Gastrocnemius medialis (tissue), 4 donors: ENCODE measurements at regions of chr10 and their contacts with region 1.

Region 1: GRCh38 chr10:92087750-92088395 is 164.3 kb downstream of the BTAF1 start:
- DNase-seq: peak; percentile 52 to 75
- ATAC-seq: peak; percentile 95 to 98
- H3K4me3 ChIP-seq: no peak overlapping the region
- H3K27ac ChIP-seq: peak overlapping the region; percentile 23 to 58 (median 38)
- H3K4me1 ChIP-seq: peaks cover 24 to 27% of the 10 kb centered on the region in 2 donors
- H3K27me3 ChIP-seq: no peaks in the 10 kb centered on the region
- CTCF ChIP-seq: peak; percentile 77 to 95 (median 81)
- POLR2A ChIP-seq: no peak

Region 2: GRCh38 chr10:92240289-92241157 is 152.7 kb after region 1 on chr10:
- in situ Hi-C with region 1: loop called in 1 of 4 experiments (anchors 10 kb)
- intact Hi-C with region 1: loop called (anchors 2 kb)
- DNase-seq: peak; percentile 70 to 77
- ATAC-seq: peak; percentile 68 to 75
- H3K4me3 ChIP-seq: peak overlapping the region; percentile 76 to 80 (median 78)
- H3K27ac ChIP-seq: peak overlapping the region; percentile 89 to 95 (median 94)
- H3K4me1 ChIP-seq: peaks cover 54 to 62% of the 10 kb centered on the region in 2 donors
- H3K27me3 ChIP-seq: no peaks in the 10 kb centered on the region
- CTCF ChIP-seq: no peak
- POLR2A ChIP-seq: peak; percentile 53 to 84

Region 3: DNA sequence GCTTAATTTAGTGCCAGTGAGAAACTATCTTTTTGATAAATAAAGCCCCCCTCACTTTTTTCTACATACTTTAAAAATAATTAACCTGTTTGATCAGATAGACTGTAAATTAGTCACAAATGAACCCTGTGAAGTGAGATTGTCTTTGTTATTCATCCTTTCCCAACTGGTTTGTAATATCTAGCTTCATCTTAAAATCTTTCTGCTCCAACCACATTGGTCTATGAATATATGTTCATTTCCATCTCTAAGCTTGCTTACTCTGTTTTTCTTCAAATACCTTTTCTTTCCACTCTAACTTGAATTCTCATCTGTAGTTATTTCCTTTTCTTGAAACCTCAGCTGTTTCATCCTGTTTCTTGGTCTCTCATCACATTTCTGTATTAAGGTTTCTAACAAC is 215.2 kb after region 1 on chr10:
- in situ Hi-C with region 1: loop called (anchors 10 to 25 kb)
- intact Hi-C with region 1: no loop called
- DNase-seq: no peak
- ATAC-seq: no peak
- H3K4me3 ChIP-seq: no peak overlapping the region
- H3K27ac ChIP-seq: no peak overlapping the region
- H3K4me1 ChIP-seq: peaks cover 11 to 42% of the 10 kb centered on the region in 2 donors
- H3K27me3 ChIP-seq: no peaks in the 10 kb centered on the region
- CTCF ChIP-seq: no peak
- POLR2A ChIP-seq: no peak

Region 4: DNA sequence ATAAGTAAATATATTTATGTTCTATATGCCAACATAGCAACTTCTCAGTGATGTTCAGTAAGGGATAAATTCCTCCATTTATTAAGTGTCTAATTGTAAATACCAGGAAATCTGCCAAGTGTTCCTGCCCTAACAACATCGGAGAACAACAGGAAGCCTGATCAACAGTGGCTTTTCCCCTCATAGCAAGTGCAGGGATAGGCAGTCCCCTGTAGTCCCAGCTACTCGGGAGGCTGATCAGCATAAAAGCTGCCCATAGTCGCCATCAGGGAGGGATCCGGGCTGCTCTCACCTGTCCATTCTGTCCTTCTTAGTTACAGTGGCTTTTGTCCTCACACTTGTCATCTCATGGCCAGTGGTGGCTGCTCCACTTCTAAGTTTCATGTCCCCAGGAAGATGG is 344.7 kb after region 1 on chr10:
- in situ Hi-C with region 1: loop called (anchors 5 to 10 kb)
- intact Hi-C with region 1: loop called (anchors 1 kb)
- DNase-seq: no peak
- ATAC-seq: peak in 1 of 2 donors; percentile 30
- H3K4me3 ChIP-seq: no peak overlapping the region
- H3K27ac ChIP-seq: peak overlapping the region; percentile 35 to 61 (median 49)
- H3K4me1 ChIP-seq: peaks cover 11 to 12% of the 10 kb centered on the region in 2 donors
- H3K27me3 ChIP-seq: no peaks in the 10 kb centered on the region
- CTCF ChIP-seq: no peak
- POLR2A ChIP-seq: no peak